PC-9 (cell line): ENCODE measurements at regions of chr1 and their contacts with region 1.

Region 1: DNA sequence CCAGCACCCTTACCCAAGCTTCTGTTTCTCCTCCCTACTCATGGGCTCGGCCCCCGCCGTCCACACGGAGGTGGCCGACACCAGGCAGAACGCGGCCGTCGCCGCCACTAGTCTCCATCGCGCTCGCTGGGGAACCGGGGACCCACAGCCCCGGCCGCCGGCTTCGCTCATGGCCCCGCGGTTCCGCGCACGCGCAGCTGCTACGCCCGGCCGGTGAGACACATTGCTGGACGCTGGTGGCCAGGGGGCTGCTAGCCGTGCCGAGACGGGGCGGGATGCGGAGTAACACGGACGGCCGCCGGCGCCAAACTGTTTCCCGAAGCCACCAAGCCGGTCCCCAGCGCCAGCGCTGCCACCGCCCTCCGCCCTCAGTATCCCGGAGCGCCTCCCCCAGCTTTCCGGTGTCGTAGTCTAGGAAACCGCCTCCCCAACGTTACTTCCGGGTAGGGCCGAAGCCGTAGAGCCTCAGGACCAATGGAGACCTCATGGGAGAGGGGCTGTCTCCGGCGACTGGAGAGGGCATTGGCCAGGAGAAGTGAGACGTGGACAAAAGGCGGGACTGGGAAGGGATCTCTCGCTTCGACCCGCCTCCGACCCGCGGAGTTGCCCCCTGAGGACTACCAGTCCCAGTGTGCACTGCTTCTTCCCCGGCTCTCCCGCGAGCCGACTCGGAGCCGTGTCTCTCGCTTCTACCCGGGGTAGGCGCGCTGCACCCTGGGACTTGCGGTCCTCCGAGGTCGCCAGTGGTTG is at the start of gene EDEM3:
- DNase-seq: peak; percentile 98
- H3K4me3 ChIP-seq: peak within 1 kb of the TSS; percentile 98
- H3K27ac ChIP-seq: peak within 1 kb of the TSS; percentile 52
- H3K4me1 ChIP-seq: peaks cover 25% of the 10 kb centered on the region
- H3K27me3 ChIP-seq: no peaks in the 10 kb centered on the region
- CTCF ChIP-seq: no peak
- total RNA-seq, gene EDEM3: 10.3 and 14.5 TPM in 2 replicates

Region 2: GRCh38 chr1:184838489-184838951 is 83.9 kb after region 1 on chr1:
- CTCF ChIA-PET with region 1: no interaction called
- POLR2A ChIA-PET with region 1: interaction called, 11 read pairs
- intact Hi-C with region 1: no loop called
- DNase-seq: peak; percentile 51 to 89
- H3K4me3 ChIP-seq: no peak overlapping the region
- H3K27ac ChIP-seq: peak overlapping the region; percentile 48
- H3K4me1 ChIP-seq: peaks cover 23% of the 10 kb centered on the region
- H3K27me3 ChIP-seq: no peaks in the 10 kb centered on the region
- CTCF ChIP-seq: no peak

Region 3: GRCh38 chr1:184905923-184906322 is 151.3 kb after region 1 on chr1:
- CTCF ChIA-PET with region 1: no interaction called
- POLR2A ChIA-PET with region 1: interaction called, 21 read pairs
- intact Hi-C with region 1: no loop called
- DNase-seq: peak in 1 of 2 experiments; percentile 43
- H3K4me3 ChIP-seq: no peak overlapping the region
- H3K27ac ChIP-seq: no peak overlapping the region
- H3K4me1 ChIP-seq: peaks cover 19% of the 10 kb centered on the region
- H3K27me3 ChIP-seq: no peaks in the 10 kb centered on the region
- CTCF ChIP-seq: no peak

Region 4: DNA sequence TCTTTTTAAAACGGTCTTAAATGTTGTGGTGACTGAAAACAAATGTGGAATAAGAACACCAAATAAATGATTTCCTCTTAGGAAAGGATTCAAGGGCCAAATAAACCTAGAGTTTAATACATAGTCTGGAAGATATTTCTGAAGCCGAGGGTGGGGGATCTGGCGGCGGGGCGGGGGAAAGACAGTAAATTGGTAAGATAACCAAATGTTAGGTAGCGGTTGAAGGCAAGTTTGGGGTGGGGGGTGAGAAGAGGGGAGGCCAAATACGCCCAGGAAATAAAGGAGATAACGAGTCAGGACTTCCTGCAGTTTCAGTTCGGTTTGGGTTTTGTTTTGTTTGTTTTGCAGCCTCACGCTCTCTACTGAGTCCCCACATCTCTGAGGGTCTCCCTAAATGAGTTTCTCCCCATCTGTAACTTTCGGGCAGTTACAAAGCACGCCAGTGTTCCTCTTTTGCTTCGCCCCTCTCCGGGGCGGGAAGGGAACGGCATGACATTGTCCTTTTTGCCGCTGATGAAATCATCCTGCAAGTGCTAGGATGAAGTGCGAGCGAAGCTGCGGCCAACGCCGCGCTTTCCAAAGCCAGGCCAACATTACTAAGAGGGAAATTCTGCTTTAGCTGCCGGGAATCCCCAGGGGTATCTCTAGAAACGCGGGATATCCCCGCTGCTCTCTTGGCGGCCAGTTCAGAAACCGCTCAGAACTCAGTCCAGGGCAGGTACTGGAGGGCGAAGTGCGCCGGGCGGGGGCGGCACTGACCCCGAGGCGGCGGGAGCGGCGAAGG is 218.8 kb after region 1 on chr1:
- CTCF ChIA-PET with region 1: no interaction called
- POLR2A ChIA-PET with region 1: interaction called, 13 read pairs
- intact Hi-C with region 1: no loop called
- DNase-seq: peak in 1 of 2 experiments; percentile 38
- H3K4me3 ChIP-seq: peak overlapping the region; percentile 92
- H3K27ac ChIP-seq: peak overlapping the region; percentile 52
- H3K4me1 ChIP-seq: peaks cover 20% of the 10 kb centered on the region
- H3K27me3 ChIP-seq: no peaks in the 10 kb centered on the region
- CTCF ChIP-seq: no peak

Region 5: DNA sequence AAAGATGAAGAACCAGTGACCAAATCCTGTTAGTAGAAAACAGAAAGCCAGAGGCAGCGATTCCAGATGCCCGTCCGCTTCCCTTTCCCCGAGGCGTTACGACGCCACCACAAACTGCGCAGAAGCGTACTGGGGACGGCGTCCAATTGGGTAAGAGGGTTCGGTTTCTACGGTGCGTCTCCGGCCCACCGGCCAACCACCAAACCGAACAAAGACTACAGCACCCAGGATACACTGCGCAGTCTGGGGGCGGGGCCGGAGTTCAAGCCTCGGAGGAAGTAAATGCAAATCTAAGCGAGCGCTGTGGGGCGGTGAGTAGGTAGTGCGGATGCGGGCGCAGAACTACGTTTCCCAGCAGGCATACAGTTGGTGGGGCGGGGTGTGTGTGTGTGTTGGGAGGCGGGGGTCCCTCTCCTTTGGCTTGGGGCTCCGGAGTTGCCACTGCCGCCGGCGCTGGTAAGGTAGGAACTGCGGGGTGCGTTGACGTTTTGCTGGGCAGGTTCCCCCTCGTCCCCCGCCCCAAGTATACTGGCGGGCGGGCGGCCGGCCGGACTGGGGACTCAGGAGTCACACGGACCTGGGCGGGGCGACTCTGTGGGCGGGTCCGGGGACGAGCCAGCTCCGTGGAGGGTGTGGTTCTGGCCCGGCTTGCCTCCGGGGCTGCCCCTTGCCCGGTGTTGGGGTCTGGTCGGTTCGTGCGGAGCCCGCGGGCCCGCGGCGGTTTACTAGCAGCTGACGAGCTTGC is 402.4 kb after region 1 on chr1 and contains the starts of genes SWT1 and TRMT1L:
- CTCF ChIA-PET with region 1: no interaction called
- POLR2A ChIA-PET with region 1: no interaction called
- intact Hi-C with region 1: loop called (anchors 1 kb)
- DNase-seq: peak; percentile 95 to 98
- H3K4me3 ChIP-seq: peak within 1 kb of the TSS; percentile 82
- H3K27ac ChIP-seq: peak within 1 kb of the TSS; percentile 55
- H3K4me1 ChIP-seq: peaks cover 21% of the 10 kb centered on the region
- H3K27me3 ChIP-seq: no peaks in the 10 kb centered on the region
- CTCF ChIP-seq: no peak
- total RNA-seq, gene SWT1: 2.9 and 3.6 TPM in 2 replicates
- total RNA-seq, gene TRMT1L: 16.9 and 18.3 TPM in 2 replicates